ENCODE measurements at regions of chr1 and their contacts with region 1.

Region 1: GRCh38 chr1:8671306-8671917 is 146.0 kb downstream of the RERE start:
- DNase-seq: peak; percentile 79
- H3K4me3 ChIP-seq: no peak overlapping the region
- H3K27ac ChIP-seq: no peak overlapping the region
- H3K4me1 ChIP-seq: peaks cover 32% of the 10 kb centered on the region
- H3K27me3 ChIP-seq: no peaks in the 10 kb centered on the region
- CTCF ChIP-seq: peak; percentile 66 to 78
- POLR2A ChIP-seq: no peak

Region 2: DNA sequence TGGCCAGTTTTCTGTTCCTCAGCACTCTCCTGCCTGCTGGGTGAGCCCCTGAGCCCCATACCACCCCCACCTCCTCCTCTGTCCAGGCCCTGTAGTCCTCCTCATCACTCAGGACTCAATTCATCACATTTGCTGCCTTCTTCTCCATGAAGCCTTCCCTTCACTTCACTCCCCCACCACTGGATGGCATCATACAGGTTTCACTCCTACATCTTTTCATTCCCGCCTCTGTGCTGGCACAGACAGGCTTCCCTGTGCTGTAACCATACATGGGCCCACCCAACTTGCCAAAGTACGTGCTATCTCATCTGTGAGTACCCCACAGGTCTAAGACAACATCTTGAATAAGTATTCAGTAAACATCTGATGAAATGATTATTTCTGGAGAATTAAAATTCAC is 296.6 kb before region 1 on chr1:
- CTCF ChIA-PET with region 1: interaction called, 6 read pairs
- POLR2A ChIA-PET with region 1: no interaction called
- dilution Hi-C with region 1: no loop called
- intact Hi-C with region 1: loop called (anchors 1 kb)
- DNase-seq: peak; percentile 55
- H3K4me3 ChIP-seq: no peak overlapping the region
- H3K27ac ChIP-seq: no peak overlapping the region
- H3K4me1 ChIP-seq: peaks cover 24% of the 10 kb centered on the region
- H3K27me3 ChIP-seq: no peaks in the 10 kb centered on the region
- CTCF ChIP-seq: peak; percentile 28 to 47
- POLR2A ChIP-seq: no peak

Region 3: DNA sequence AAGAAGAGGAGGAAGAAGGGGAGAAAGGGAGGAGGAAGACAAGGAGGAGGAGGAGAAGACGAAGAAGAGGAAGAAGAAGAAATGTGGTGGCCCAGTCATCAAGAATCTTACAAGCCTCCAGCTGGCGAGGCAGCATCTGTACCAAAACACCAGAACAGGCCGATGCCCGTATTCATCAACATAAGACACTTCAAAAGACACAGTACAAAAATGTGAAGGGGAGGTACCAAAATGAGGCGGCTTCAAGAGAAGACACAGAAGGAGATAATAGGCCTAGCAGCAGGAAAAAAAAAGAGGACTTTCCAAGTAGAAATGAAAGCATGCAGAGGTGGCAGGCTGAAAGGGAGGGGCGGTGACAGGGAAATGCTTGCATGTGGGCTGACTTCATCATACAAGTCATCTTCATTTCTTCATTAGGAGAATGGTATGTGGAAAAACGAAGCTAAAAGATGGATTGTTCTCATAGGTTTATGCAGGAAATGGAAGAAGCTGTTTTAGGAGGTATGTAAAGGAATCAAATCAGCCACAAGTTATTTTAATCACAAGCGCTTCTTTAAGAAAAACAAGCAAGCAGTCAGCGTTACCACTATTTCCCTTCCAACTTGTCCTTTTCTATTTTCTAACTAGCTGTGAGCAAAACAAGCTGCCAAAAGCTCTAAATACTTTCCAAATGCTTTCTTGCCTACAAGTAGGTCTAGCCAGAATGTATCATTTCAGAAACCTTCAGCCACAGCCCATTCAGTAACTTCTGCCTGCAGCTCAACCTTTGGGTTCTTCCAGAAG is 161.2 kb before region 1 on chr1:
- CTCF ChIA-PET with region 1: no interaction called
- POLR2A ChIA-PET with region 1: no interaction called
- dilution Hi-C with region 1: no loop called
- intact Hi-C with region 1: no loop called
- DNase-seq: peak; percentile 29
- H3K4me3 ChIP-seq: no peak overlapping the region
- H3K27ac ChIP-seq: no peak overlapping the region
- H3K4me1 ChIP-seq: no peaks in the 10 kb centered on the region
- H3K27me3 ChIP-seq: no peaks in the 10 kb centered on the region
- CTCF ChIP-seq: no peak
- POLR2A ChIP-seq: no peak

Region 4: DNA sequence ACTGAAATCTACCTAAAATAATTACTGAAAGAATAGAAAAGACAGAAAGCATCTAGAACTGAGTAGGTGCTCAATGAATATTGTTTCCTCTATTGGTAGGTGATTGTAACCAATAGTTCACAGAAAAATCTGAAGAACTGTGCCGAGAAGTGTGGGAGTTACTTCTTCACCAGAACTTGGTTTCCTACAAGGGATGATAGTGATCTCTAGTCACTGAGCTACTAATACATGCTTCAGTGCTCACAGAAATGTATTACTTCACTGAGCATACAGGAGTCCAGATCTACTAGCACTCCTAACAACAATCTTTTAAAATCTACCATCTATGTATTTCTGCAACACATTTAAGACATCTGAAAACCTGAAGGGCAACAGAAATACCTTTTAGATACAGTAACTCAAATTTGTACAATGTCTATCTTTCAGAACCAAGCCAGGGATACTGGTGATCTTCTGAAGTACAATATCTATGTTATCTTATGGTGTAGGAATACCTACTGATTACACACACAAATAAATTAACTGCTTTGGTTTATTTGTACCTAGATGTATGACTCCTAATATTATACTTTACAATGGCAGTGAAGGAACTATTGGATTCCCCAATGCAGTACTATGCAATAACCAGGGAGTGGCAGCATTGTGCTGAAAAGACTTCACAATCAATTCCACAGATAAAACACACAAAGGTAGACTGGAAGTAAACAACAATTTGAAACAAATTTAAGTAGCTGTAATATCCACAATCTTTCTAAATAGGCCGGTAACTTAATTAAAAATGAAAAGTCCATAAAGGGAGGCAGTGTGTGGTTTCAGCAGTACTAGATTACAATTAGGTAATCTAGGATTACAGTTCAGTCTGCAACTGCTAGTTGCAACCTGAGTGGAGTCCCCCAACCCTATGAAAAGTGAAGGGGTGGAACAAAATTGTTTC is 110.5 kb before region 1 on chr1:
- CTCF ChIA-PET with region 1: interaction called, 102 read pairs
- POLR2A ChIA-PET with region 1: no interaction called
- dilution Hi-C with region 1: no loop called
- intact Hi-C with region 1: loop called (anchors 1 kb)
- DNase-seq: peak; percentile 64
- H3K4me3 ChIP-seq: no peak overlapping the region
- H3K27ac ChIP-seq: no peak overlapping the region
- H3K4me1 ChIP-seq: peaks cover 2% of the 10 kb centered on the region
- H3K27me3 ChIP-seq: no peaks in the 10 kb centered on the region
- CTCF ChIP-seq: peak; percentile 58 to 66
- POLR2A ChIP-seq: no peak

Region 5: GRCh38 chr1:8586438-8586837 is 85.0 kb before region 1 on chr1:
- CTCF ChIA-PET with region 1: interaction called, 12 read pairs
- POLR2A ChIA-PET with region 1: no interaction called
- dilution Hi-C with region 1: no loop called
- intact Hi-C with region 1: no loop called
- DNase-seq: no peak
- H3K4me3 ChIP-seq: no peak overlapping the region
- H3K27ac ChIP-seq: no peak overlapping the region
- H3K4me1 ChIP-seq: no peaks in the 10 kb centered on the region
- H3K27me3 ChIP-seq: no peaks in the 10 kb centered on the region
- CTCF ChIP-seq: no peak
- POLR2A ChIP-seq: no peak

Region 6: GRCh38 chr1:8660411-8660828 is 11.0 kb before region 1 on chr1:
- CTCF ChIA-PET with region 1: interaction called, 40 read pairs
- POLR2A ChIA-PET with region 1: no interaction called
- dilution Hi-C with region 1: no loop called
- intact Hi-C with region 1: no loop called
- DNase-seq: peak; percentile 92
- H3K4me3 ChIP-seq: no peak overlapping the region
- H3K27ac ChIP-seq: peak overlapping the region; percentile 70
- H3K4me1 ChIP-seq: peaks cover 34% of the 10 kb centered on the region
- H3K27me3 ChIP-seq: no peaks in the 10 kb centered on the region
- CTCF ChIP-seq: no peak
- POLR2A ChIP-seq: no peak

Region 7: DNA sequence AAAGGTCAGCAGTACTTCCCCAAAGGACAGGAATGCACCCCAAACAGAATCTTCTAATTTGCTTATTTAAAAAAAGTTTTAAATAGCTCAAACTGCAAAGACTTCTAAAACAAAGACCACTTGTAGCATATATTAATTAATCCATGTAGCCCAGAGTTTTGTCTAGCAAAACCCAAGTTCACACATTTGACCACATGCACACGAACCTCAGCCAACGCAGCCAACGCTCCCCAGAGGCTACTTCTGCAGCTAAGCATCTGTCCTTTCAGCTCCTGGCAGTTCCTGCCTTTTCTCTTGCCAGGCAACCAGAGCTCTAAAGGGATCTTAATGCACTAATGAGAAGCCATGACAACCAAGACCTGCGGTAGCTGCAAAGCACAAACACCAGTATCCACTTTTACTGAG is 56.4 kb after region 1 on chr1:
- CTCF ChIA-PET with region 1: interaction called, 58 read pairs
- POLR2A ChIA-PET with region 1: no interaction called
- dilution Hi-C with region 1: no loop called
- intact Hi-C with region 1: loop called (anchors 1 kb)
- DNase-seq: no peak
- H3K4me3 ChIP-seq: no peak overlapping the region
- H3K27ac ChIP-seq: no peak overlapping the region
- H3K4me1 ChIP-seq: no peaks in the 10 kb centered on the region
- H3K27me3 ChIP-seq: no peaks in the 10 kb centered on the region
- CTCF ChIP-seq: no peak
- POLR2A ChIP-seq: no peak